ENCODE measurements at regions of chr15 and their contacts with region 1.

Region 1: GRCh38 chr15:88620995-88621772 is at the start of gene AEN:
- DNase-seq: peak; percentile 99

Region 2: GRCh38 chr15:88431441-88431840 is 189.7 kb before region 1 on chr15:
- CTCF ChIA-PET with region 1: no interaction called
- POLR2A ChIA-PET with region 1: no interaction called
- DNase-seq: no peak

Region 3: GRCh38 chr15:88467073-88467934 is 153.9 kb before region 1 on chr15 and contains the starts of genes MRPL46 and MRPS11:
- CTCF ChIA-PET with region 1: interaction called, 3 read pairs
- POLR2A ChIA-PET with region 1: interaction called, 12 read pairs
- DNase-seq: peak; percentile 93

Region 4: GRCh38 chr15:88638626-88639372 is 17.6 kb after region 1 on chr15 and contains the start of gene ISG20:
- CTCF ChIA-PET with region 1: interaction called, 4 read pairs
- POLR2A ChIA-PET with region 1: interaction called, 14 read pairs
- DNase-seq: peak; percentile 77

Region 5: DNA sequence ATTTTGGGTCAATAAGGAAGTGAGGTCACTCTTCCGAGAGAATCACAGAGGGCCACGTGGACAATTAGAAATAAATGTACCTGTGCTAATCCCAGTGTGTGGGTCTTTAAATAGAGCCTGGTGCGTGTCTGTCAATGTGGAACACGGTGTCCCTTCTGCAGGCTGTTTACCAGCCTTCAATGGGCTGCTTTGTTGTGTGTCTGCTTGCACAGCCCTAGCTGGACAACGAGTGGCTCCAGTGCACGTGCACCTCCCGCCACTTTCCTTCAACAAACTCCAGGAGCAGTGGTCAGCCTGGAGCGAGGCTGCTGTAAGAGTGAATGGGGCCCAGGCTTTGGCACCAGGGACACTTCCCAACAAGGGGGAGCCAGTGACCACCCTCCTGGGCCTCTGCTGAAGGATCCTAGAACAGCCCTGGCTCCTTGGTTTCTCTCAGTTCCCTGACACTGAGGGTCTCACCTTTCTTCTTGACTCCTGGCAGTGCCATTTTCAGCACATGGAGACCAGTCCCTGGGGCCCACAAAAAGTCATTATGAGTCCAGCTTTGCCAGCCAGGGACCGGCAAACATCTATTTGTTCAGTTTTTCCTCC is 93.7 kb after region 1 on chr15:
- CTCF ChIA-PET with region 1: no interaction called
- POLR2A ChIA-PET with region 1: no interaction called
- DNase-seq: no peak